Heart left ventricle (tissue), 16 donors: ENCODE measurements at regions of chr12 and their contacts with region 1.

Region 1: GRCh38 chr12:25958428-25959070 is at the start of gene RASSF8:
- DNase-seq: peak; percentile 80 to 88 (median 84)
- ATAC-seq: peak; percentile 75 to 96 (median 88)
- H3K4me3 ChIP-seq: peak within 1 kb of the TSS; percentile 72 to 98 (median 82)
- H3K27ac ChIP-seq: peak within 1 kb of the TSS; percentile 84 to 98 (median 96)
- H3K4me1 ChIP-seq: peaks cover 0 to 41% (median 20%) of the 10 kb centered on the region in 12 donors
- H3K27me3 ChIP-seq: peaks cover 0 to 3% (median 0%) of the 10 kb centered on the region in 9 donors
- CTCF ChIP-seq: peak in 3 of 12 donors; percentile 6 to 22 (median 17)
- POLR2A ChIP-seq: peak in 1 of 2 donors; percentile 50
- total RNA-seq, gene RASSF8: 20.6 to 44.6 (median 30.9) TPM

Region 2: DNA sequence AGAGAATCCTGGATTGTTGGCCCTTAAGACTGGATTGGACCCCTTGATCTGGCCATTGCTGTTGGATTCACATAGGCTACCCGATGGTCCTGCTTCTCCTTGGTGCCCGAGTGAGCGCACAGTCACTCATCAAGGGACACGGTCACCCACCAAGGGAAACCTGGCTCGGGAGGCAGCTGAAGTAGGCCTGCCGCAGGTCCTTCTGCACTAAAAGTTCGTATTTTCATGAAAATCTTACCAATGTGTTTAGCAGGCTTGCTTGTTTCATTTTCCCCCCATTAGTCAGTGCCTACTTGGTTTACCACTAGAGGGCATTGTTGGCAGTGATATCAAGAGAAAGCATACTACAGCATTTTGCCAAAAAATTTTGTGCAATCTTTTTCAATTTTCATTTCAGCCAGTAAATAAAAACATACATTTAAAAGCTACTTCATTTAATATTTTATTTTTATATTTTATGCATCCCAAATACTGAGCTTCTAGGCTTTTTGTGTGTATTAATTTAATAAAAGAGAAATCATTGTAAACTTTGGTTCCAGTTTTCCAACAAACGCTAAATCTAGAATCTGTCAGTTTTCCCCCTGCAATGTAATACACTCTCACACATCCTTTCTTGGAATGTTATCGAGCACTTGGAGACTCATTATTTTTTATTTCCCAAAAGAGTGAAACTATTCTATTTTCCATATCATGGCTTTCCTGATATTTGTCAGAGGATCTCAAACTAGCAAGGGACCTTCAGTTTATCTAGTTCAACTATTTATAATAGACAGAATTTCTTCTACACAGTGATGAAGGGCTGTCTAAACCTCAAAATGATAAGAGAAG is 522.1 kb before region 1 on chr12:
- intact Hi-C with region 1: loop called in 2 of 10 experiments (anchors 5 kb)
- DNase-seq: peak in 1 of 5 donors; percentile 29
- ATAC-seq: peak in 3 of 4 donors; percentile 63 to 78 (median 70)
- H3K4me3 ChIP-seq: peak overlapping the region in 9 of 12 donors; percentile 30 to 48 (median 35)
- H3K27ac ChIP-seq: no peak overlapping the region
- H3K4me1 ChIP-seq: peaks cover 0 to 12% (median 0%) of the 10 kb centered on the region in 12 donors
- H3K27me3 ChIP-seq: no peaks in the 10 kb centered on the region
- CTCF ChIP-seq: peak; percentile 74 to 88 (median 79)
- POLR2A ChIP-seq: no peak

Region 3: DNA sequence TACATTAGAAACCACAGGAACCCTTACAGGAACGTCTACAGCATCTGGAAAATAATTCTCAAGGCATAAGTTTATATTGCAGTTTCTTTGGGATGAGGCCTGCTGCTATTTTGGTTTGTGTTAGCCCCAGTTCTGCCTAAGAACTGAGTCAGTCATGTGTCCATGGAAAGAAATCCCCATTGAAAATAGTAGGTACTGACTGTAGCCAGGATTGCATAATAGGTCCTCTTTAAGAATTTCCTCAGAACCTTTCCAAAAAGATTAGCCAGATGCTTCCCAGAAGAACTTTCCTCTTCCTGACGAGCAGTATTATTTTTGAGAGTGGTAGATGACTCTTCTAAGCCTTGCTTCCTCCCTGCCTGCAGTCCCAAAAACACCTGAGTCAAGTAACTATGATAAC is 52.5 kb after region 1 on chr12:
- intact Hi-C with region 1: loop called in 9 of 10 experiments (anchors 2 to 5 kb)
- DNase-seq: no peak
- ATAC-seq: peak; percentile 78 to 94 (median 92)
- H3K4me3 ChIP-seq: no peak overlapping the region
- H3K27ac ChIP-seq: peak overlapping the region; percentile 38 to 84 (median 60)
- H3K4me1 ChIP-seq: peaks cover 15 to 54% (median 33%) of the 10 kb centered on the region in 12 donors
- H3K27me3 ChIP-seq: no peaks in the 10 kb centered on the region
- CTCF ChIP-seq: no peak
- POLR2A ChIP-seq: no peak

Region 4: GRCh38 chr12:26017484-26018206 is 59.1 kb after region 1 on chr12:
- intact Hi-C with region 1: loop called in 8 of 10 experiments (anchors 2 to 5 kb)
- DNase-seq: peak in 1 of 5 donors; percentile 21
- ATAC-seq: peak in 3 of 4 donors; percentile 39 to 68 (median 49)
- H3K4me3 ChIP-seq: peak overlapping the region in 1 of 12 donors; percentile 5
- H3K27ac ChIP-seq: peak overlapping the region in 1 of 12 donors; percentile 12
- H3K4me1 ChIP-seq: peaks cover 0 to 42% (median 11%) of the 10 kb centered on the region in 12 donors
- H3K27me3 ChIP-seq: no peaks in the 10 kb centered on the region
- CTCF ChIP-seq: peak; percentile 35 to 75 (median 59)
- POLR2A ChIP-seq: no peak